HEK293T (cell line): ENCODE measurements at regions of chr2 and their contacts with region 1.

Region 1: GRCh38 chr2:60707750-60708371 is 48.2 kb upstream of the PAPOLG start:
- DNase-seq: peak; percentile 44

Region 2: DNA sequence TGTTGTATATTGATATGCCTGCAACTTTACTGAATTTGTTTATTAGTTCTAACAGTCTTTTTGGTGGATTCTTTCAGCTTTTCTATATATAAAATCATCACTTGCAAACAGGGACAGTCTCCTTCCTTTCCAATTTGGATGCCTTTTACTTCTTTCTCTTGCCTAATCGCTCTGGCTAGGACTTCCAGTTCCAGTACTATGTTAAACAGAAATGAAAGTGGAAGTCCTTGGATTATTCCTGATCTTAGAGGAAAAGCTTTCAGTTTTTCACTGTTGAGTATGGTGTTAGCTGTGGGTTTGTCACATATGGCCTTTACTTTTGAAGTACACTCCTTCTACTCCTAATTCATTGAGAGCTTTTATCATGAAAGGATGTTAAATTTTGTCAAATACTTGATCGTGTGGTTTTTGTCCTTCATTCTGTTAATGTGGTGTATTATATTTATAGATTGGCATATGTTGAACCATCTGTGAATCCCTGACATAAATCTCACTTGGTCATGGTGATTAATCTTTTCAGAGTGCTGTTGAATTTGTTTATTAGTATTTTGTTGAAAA is 226.4 kb after region 1 on chr2:
- CTCF ChIA-PET with region 1: no interaction called
- POLR2A ChIA-PET with region 1: no interaction called
- DNase-seq: no peak

Region 3: DNA sequence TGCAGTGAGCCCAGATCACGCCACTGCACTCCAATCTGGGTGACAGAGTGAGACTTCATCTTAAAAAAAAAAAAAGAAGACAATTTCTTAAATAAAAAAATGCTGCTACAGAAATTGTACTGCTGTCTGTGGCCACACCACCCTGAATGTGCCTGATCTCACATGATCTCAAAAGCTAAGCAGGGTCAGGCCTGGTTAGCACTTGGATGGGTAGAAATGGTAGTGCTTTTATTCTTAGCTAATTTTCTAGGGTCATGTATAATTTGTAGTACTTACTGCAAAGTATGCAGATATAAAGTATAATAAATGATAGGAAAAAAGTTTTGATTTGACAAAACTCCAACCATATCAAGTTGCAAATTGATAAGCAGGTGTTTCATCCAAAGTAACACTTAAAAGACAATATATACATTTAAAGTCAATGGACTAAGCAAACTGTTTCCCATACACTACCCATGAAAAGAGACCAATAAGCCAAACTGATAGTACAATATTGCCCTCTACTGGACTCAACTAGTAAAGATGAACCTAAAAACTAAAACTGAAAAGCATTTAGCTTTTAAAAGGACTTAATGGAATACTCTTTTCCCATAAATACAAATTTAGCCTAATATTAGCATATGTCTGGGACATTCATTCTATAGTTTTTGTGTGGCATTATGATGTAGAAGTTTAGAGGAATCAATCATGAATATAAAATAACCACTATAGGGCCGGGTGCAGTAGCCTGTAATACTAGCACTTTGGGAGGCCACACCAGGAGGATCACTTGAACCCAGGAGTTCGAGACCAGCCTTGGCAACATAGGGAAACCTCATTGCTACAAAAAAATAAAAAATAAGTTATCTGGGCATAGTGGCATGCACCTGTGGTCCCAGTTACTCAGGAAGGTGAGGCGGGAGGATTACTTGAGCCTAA is 291.0 kb after region 1 on chr2:
- CTCF ChIA-PET with region 1: interaction called, 12 read pairs
- POLR2A ChIA-PET with region 1: no interaction called
- DNase-seq: peak; percentile 39